Transverse colon (tissue), 4 donors: ENCODE measurements at regions of chr15 and their contacts with region 1.

Region 1: GRCh38 chr15:40421246-40422157 is 15.9 kb downstream of the IVD start:
- DNase-seq: peak; percentile 85
- H3K4me3 ChIP-seq: peak overlapping the region in 2 of 4 donors; percentile 1 to 21
- H3K27ac ChIP-seq: peak overlapping the region; percentile 60 to 70 (median 67)
- H3K4me1 ChIP-seq: peaks cover 9 to 23% (median 20%) of the 10 kb centered on the region in 4 donors
- H3K27me3 ChIP-seq: no peaks in the 10 kb centered on the region
- CTCF ChIP-seq: peak; percentile 94 to 97 (median 96)
- EP300 ChIP-seq: no peak
- POLR2A ChIP-seq: peak; percentile 38

Region 2: DNA sequence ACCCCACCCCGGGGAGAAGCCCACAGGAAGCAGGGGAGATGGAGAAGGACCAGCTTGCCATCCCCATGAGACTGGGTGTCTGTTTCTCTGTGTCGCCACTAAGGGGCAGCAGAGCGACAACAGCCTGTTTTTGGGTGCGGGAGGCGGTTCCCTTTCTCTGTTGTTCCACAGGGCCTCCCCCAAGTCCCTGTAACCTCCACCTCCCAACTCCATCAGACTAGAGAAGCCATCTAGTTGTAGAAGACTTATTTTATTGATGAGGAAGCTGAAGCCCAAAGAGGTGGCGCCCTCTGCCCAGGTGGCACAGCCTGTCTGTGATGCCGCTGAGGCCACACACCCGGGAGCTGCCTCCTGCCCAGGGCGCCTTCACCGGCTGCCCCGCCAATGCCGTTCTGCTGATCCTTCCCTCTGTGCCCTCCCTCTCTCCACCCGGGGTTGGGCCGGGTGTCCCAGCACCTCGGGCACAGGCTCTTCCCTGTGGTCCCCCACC is 76.8 kb before region 1 on chr15:
- in situ Hi-C with region 1: no loop called
- intact Hi-C with region 1: loop called (anchors 1 kb)
- DNase-seq: peak; percentile 85
- H3K4me3 ChIP-seq: peak overlapping the region in 2 of 4 donors; percentile 8 to 12
- H3K27ac ChIP-seq: peak overlapping the region; percentile 95 to 98 (median 96)
- H3K4me1 ChIP-seq: peaks cover 48 to 93% (median 86%) of the 10 kb centered on the region in 4 donors
- H3K27me3 ChIP-seq: no peaks in the 10 kb centered on the region
- CTCF ChIP-seq: peak; percentile 76 to 88 (median 85)
- EP300 ChIP-seq: no peak
- POLR2A ChIP-seq: peak; percentile 70

Region 3: GRCh38 chr15:40367686-40368611 is 53.6 kb before region 1 on chr15:
- in situ Hi-C with region 1: loop called in 1 of 4 experiments (anchors 10 kb)
- intact Hi-C with region 1: no loop called
- DNase-seq: peak; percentile 91
- H3K4me3 ChIP-seq: peak overlapping the region in 2 of 4 donors; percentile 22 to 36
- H3K27ac ChIP-seq: peak overlapping the region; percentile 67 to 77 (median 72)
- H3K4me1 ChIP-seq: peaks cover 10 to 17% (median 16%) of the 10 kb centered on the region in 4 donors
- H3K27me3 ChIP-seq: no peaks in the 10 kb centered on the region
- CTCF ChIP-seq: peak; percentile 70 to 95 (median 79)
- EP300 ChIP-seq: no peak
- POLR2A ChIP-seq: no peak

Region 4: DNA sequence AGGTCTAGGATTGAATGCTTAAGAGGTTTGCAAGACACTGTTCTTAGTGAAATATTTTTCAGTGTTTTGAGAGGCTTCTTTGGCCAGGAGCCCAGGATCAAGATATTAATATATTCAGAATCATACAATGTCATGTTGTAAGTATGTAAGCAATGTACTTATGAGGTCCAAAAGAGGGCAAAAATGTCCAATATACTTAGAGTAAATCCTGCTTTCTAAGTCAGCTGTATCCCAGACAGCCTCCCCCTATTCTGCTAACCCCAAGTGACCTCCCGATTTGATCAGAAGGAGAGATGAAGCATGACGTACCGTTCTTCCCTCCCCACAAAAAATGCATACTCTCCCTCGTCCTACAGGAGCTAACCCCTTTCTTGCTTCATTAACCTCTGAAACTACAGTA is 602.6 kb after region 1 on chr15:
- in situ Hi-C with region 1: no loop called
- intact Hi-C with region 1: no loop called
- DNase-seq: no peak
- H3K4me3 ChIP-seq: no peak overlapping the region
- H3K27ac ChIP-seq: peak overlapping the region; percentile 13 to 61 (median 54)
- H3K4me1 ChIP-seq: peaks cover 0 to 20% (median 4%) of the 10 kb centered on the region in 4 donors
- H3K27me3 ChIP-seq: no peaks in the 10 kb centered on the region
- CTCF ChIP-seq: no peak
- EP300 ChIP-seq: no peak
- POLR2A ChIP-seq: no peak